ENCODE measurements at regions of chr14 and their contacts with region 1.

Region 1: DNA sequence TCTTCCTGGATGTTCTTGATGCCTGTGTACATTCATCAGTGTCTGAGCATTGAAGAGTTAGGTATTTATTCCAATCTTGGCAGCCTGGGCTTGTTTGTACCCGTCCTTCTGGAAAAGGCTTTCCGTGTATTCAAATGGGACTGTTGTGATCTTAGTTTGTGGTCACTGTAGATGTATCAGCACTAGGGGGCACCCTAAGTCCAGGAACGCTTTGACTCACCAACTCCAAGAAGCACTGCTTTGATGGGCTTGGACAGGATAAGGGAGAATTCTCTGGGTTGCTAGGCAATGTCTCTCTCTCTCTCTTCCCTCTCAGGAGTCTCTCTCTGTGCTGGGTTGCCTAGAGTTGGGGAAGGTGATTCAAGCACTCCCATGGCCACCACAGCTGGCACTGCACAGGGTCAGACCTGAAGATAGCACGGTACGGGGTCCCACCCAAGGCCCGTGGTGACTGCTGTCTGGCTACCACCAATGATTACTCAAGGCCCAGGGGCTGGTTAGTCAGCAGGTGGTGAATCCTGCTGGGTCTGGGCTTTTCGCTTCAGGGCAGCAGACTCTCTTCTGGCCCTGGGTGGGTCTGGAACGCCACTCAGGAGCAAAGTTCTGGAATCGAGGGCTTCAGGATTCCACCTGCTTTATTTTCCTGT is 211.1 kb upstream of the RGS6 start:
- DNase-seq: peak in 1 of 2 donors; percentile 52
- ATAC-seq: peak; percentile 70 to 93 (median 85)
- H3K4me3 ChIP-seq: no peak overlapping the region
- H3K27ac ChIP-seq: no peak overlapping the region
- H3K4me1 ChIP-seq: peaks cover 0 to 4% (median 0%) of the 10 kb centered on the region in 9 donors
- H3K27me3 ChIP-seq: no peaks in the 10 kb centered on the region
- CTCF ChIP-seq: peak; percentile 29 to 67 (median 63)

Region 2: DNA sequence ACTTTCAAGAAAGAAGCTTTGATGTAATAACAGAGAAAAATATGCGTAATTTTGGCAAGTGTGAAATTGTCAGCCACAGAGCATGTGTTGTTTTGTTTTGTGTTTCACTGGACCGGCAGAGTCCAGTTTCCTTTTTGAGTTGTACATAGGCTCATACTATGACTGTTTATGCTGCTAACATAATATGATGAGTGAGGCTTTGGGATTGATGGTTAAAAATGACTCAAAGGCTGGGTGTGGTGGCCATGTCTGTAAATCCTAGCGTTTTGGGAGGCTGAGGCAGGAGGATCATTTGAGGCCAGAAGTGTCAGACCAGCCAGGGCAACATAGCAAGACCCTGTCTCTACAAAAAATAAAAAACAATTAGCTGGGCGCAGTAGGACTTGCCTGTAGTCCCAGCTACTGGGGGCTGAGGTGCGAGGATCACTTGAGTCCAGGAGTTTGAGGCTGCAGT is 325.9 kb before region 1 on chr14:
- intact Hi-C with region 1: no loop called
- DNase-seq: no peak
- ATAC-seq: no peak
- H3K4me3 ChIP-seq: no peak overlapping the region
- H3K27ac ChIP-seq: no peak overlapping the region
- H3K4me1 ChIP-seq: peaks cover 0 to 22% (median 0%) of the 10 kb centered on the region in 9 donors
- H3K27me3 ChIP-seq: no peaks in the 10 kb centered on the region
- CTCF ChIP-seq: no peak

Region 3: DNA sequence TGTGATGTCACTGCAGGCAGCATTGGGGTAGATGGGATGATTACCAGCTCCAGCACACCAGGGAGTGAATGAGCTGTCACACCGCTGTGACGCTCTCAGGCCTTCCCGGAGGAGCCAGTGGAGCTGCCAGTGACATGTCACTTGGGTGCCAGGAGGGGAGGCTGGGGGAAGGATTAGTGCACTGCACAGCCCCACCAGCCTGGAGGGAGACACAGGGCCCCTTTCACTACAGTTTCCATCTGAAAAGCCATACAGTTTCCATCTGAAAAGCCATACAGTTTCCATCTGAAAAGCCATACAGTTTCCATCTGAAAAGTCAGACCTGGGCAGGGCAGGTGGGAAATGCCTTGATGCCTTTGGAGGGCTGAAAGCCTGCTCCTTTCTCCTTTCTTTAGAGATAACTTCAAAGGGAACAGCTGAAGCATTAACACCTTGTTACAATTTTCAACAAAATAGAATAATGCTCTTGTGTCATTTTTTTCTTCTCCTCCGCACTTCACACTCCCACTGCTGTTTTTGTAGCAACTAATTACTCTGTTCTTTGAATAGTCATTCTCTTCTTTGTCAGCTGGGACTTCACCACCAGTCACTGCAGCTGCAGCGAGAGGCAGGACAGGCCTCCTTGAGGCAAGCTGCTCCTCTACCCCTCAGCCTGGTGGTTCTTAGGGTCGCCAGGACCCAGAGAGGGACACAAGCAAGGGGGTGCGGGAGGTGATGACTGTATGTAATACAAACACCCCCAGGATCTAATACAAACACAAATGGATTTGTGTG is 45.8 kb before region 1 on chr14:
- intact Hi-C with region 1: loop called in 1 of 10 experiments (anchors 1 kb)
- DNase-seq: no peak
- ATAC-seq: no peak
- H3K4me3 ChIP-seq: no peak overlapping the region
- H3K27ac ChIP-seq: no peak overlapping the region
- H3K4me1 ChIP-seq: no peaks in the 10 kb centered on the region
- H3K27me3 ChIP-seq: no peaks in the 10 kb centered on the region
- CTCF ChIP-seq: no peak

Region 4: GRCh38 chr14:71753126-71753830 is 32.2 kb after region 1 on chr14:
- intact Hi-C with region 1: loop called in 2 of 10 experiments (anchors 2 kb)
- DNase-seq: peak; percentile 89 to 96
- ATAC-seq: peak; percentile 81 to 94 (median 87)
- H3K4me3 ChIP-seq: peak overlapping the region in 3 of 10 donors; percentile 1 to 24 (median 18)
- H3K27ac ChIP-seq: peak overlapping the region in 1 of 10 donors; percentile 22
- H3K4me1 ChIP-seq: peaks cover 0 to 11% (median 10%) of the 10 kb centered on the region in 9 donors
- H3K27me3 ChIP-seq: no peaks in the 10 kb centered on the region
- CTCF ChIP-seq: peak; percentile 81 to 99 (median 95)

Region 5: DNA sequence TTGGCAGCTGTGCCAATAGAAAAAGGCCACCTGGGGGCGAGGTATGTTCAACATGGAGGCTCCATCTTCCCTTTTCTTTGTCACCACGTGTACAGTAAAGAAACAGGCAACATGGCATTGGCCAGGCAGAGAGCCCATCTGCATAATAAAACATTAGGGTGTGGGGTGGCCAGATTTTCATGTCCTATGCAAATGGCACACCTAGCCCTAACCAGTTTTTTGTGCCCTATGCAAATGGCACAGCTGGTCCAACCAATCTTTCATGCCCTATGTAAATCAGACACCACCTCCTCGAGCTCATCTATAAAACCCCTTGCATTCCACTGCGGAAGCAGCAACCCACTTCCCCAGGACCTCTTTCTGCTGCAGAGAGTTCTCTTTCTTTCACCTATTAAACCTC is 62.0 kb after region 1 on chr14:
- intact Hi-C with region 1: no loop called
- DNase-seq: no peak
- ATAC-seq: no peak
- H3K4me3 ChIP-seq: no peak overlapping the region
- H3K27ac ChIP-seq: no peak overlapping the region
- H3K4me1 ChIP-seq: peaks cover 0 to 29% (median 4%) of the 10 kb centered on the region in 9 donors
- H3K27me3 ChIP-seq: no peaks in the 10 kb centered on the region
- CTCF ChIP-seq: no peak

Region 6: GRCh38 chr14:71855399-71856036 is 134.4 kb after region 1 on chr14:
- intact Hi-C with region 1: loop called in 4 of 10 experiments (anchors 5 kb)
- DNase-seq: peak; percentile 67
- ATAC-seq: peak in 6 of 8 donors; percentile 59 to 75 (median 68)
- H3K4me3 ChIP-seq: no peak overlapping the region
- H3K27ac ChIP-seq: no peak overlapping the region
- H3K4me1 ChIP-seq: peaks cover 0 to 9% (median 4%) of the 10 kb centered on the region in 9 donors
- H3K27me3 ChIP-seq: no peaks in the 10 kb centered on the region
- CTCF ChIP-seq: peak; percentile 48 to 75 (median 66)

Region 7: DNA sequence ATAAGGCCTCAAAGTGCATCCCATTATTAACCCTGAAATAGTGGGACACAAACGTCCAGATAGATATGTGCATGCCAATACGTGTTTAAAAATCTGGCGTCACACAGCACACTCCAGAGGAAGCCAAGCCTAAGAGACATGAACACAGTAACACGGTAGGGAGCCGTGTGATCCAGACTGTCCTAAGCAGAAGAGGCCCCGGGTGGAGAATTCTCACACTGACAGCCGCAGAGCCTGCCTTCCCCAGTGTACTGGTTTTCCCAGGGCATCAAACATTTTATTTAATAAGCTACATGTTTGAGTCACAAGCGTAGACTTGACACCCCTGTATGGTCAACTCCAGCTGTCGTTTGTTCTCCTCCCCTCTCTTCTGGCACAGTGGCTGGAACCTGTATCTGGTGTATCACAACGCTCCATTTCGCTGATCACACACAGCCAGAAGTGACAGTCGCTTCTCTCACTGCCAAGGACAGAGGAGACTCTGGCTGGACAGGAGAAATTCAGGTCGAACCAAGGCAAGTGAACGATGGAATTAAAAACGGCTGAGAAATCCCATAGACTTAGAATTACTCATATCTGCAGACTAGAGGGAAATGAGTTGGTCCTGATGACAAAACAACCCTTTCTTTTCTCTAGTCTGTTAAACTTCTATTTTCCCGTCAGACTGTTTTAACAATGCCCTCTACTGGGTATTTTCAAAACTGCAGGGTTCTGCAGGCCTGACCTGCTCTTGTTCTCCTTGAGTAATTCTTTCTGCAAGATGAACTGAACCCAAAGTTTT is 571.0 kb after region 1 on chr14:
- intact Hi-C with region 1: loop called in 1 of 10 experiments (anchors 5 kb)
- DNase-seq: peak in 1 of 2 donors; percentile 29
- ATAC-seq: peak; percentile 81 to 88 (median 84)
- H3K4me3 ChIP-seq: peak overlapping the region in 8 of 10 donors; percentile 11 to 42 (median 26)
- H3K27ac ChIP-seq: peak overlapping the region in 2 of 10 donors; percentile 35 to 42
- H3K4me1 ChIP-seq: peaks cover 0 to 5% (median 0%) of the 10 kb centered on the region in 9 donors
- H3K27me3 ChIP-seq: no peaks in the 10 kb centered on the region
- CTCF ChIP-seq: peak; percentile 60 to 88 (median 81)

Region 8: DNA sequence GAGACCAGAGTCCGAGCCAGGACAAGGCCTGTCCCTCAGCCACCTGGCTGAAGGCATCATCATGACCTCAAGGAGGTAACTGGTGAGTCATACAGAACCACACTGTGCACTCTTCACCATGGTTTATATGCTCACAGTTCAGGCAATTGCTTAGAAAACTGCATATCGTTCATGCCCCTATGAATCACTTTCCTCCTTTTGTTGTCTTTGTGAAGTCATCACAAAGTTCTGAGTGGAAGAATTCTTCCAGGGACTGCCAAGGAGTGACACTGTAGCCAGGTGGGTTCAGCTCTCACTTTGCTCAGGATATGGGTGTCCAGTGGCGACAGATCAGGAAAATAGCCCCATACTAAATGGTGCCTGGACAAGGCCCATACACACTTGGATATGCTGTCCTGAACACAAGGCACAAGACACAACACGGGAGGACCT is 1080.3 kb after region 1 on chr14:
- intact Hi-C with region 1: no loop called
- DNase-seq: no peak
- ATAC-seq: peak in 4 of 8 donors; percentile 8 to 36 (median 22)
- H3K4me3 ChIP-seq: no peak overlapping the region
- H3K27ac ChIP-seq: peak overlapping the region in 6 of 10 donors; percentile 26 to 69 (median 40)
- H3K4me1 ChIP-seq: peaks cover 0 to 51% (median 27%) of the 10 kb centered on the region in 9 donors
- H3K27me3 ChIP-seq: no peaks in the 10 kb centered on the region
- CTCF ChIP-seq: no peak

Measured in heart right ventricle (tissue), 16 donors.